ENCODE measurements at regions of chr10 and their contacts with region 1.

Region 1: DNA sequence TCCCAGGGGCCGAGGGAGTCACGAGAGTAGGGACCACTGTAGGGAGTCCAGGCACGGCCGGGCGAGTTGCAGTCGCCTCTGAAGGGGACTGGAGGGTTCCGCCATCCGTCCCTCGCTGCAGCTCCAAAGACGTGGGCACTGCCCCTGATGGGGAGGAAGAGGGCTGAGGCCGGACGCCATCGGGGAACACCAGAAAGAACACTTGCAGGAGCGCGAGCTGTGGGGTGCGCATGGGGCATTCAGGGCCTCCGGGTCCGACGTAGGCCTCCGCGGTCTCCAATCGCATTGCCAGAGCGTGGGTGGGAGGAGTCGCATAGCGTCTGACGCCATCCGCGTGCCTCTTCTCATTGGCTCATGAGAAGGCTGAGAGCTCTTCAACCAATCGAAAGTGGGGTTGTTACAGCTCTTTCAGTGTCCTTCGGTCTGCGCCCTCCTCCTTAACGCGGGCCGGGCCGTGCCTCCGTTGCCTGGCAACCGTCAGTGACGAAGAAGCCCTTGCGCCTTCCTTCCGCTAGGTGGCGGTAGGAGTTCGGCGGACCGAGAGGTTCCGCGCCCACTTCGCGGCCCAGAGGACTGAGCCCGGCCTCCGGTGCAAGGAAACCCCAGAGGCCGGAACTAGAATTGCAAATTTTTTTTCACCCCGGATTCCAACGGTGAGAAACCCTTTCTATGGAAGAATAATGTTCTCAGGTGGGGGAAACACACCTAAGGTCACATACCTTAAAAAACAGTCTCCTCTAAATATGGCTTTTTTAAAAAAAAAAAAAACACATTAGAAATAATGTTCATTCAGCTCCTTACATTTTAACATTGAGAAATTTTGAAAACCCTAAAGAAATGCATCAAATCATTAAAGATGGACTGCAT is at the start of gene TCTN3:
- DNase-seq: peak; percentile 97
- H3K4me3 Mint-ChIP-seq: peak within 1 kb of the TSS; percentile 96
- H3K27ac Mint-ChIP-seq: peak within 1 kb of the TSS; percentile 83
- H3K4me1 Mint-ChIP-seq: peaks cover 37% of the 10 kb centered on the region
- H3K27me3 Mint-ChIP-seq: no peaks in the 10 kb centered on the region
- total RNA-seq, gene TCTN3: 17.6 to 19.2 TPM

Region 2: GRCh38 chr10:95656291-95657164 is 37.4 kb before region 1 on chr10 and contains the start of gene ALDH18A1:
- CTCF ChIA-PET with region 1: interaction called, 8 read pairs
- intact Hi-C with region 1: loop called (anchors 1 kb)
- DNase-seq: peak; percentile 85
- H3K4me3 Mint-ChIP-seq: peak within 1 kb of the TSS; percentile 99
- H3K27ac Mint-ChIP-seq: peak within 1 kb of the TSS; percentile 88
- H3K4me1 Mint-ChIP-seq: peaks cover 31% of the 10 kb centered on the region
- H3K27me3 Mint-ChIP-seq: no peaks in the 10 kb centered on the region
- total RNA-seq, gene ALDH18A1: 82.1 to 91.7 TPM

Region 3: GRCh38 chr10:95841661-95842498 is 148.0 kb after region 1 on chr10:
- CTCF ChIA-PET with region 1: interaction called, 144 read pairs
- intact Hi-C with region 1: loop called (anchors 1 kb)
- DNase-seq: peak; percentile 67
- H3K4me3 Mint-ChIP-seq: no peak overlapping the region
- H3K27ac Mint-ChIP-seq: no peak overlapping the region
- H3K4me1 Mint-ChIP-seq: no peaks in the 10 kb centered on the region
- H3K27me3 Mint-ChIP-seq: peaks cover 6% of the 10 kb centered on the region

Region 4: DNA sequence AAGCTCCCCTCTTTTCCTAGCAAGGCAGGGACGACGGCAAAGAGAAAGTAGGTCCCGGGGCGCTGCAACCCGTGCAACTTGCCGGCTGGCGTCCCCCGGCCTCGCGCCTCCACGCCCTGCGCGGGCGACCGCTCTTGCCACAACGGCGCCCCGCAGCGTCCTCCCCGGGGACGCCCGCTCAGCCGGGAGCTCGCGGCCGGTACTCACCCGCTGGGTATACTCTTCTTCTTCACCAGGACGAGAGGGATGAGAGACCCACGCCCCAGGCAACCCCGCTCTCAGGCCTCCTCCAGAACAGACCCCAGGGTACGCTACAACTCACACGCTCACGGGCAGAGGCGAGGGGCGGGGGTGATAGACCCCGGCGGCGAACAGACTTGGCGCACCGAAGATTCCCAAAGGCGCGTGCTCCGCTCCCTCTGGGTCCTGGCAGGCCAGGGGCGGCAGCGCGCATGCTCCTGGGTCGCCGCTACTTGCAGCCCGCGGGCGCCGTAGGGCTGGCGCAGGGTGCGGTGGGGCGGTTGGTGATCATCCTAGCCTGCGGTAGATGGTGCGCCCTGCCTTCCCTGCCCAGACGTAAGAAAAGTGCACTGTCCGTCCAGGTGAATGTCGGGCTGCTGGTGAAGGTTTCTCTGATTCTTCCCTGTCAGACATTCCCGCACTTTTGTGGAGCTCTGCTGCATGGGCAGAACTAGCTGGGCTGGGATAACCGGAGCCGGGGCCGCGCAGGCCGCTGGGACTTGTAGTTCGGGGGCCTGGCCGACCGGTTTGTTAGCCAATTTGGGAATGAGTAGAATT is 213.8 kb after region 1 on chr10 and contains the start of gene CC2D2B:
- CTCF ChIA-PET with region 1: interaction called, 6 read pairs
- intact Hi-C with region 1: loop called (anchors 1 kb)
- DNase-seq: peak; percentile 73
- H3K4me3 Mint-ChIP-seq: peak within 1 kb of the TSS; percentile 90
- H3K27ac Mint-ChIP-seq: peak within 1 kb of the TSS; percentile 89
- H3K4me1 Mint-ChIP-seq: peaks cover 14% of the 10 kb centered on the region
- H3K27me3 Mint-ChIP-seq: no peaks in the 10 kb centered on the region
- total RNA-seq, gene CC2D2B: not detected

Region 5: GRCh38 chr10:96089670-96090462 is 396.0 kb after region 1 on chr10:
- CTCF ChIA-PET with region 1: interaction called, 4 read pairs
- intact Hi-C with region 1: loop called (anchors 1 kb)
- DNase-seq: peak; percentile 95
- H3K4me3 Mint-ChIP-seq: peak overlapping the region; percentile 92
- H3K27ac Mint-ChIP-seq: peak overlapping the region; percentile 98
- H3K4me1 Mint-ChIP-seq: peaks cover 5% of the 10 kb centered on the region
- H3K27me3 Mint-ChIP-seq: peaks cover 13% of the 10 kb centered on the region

Region 6: GRCh38 chr10:96292971-96293920 is 599.3 kb after region 1 on chr10:
- CTCF ChIA-PET with region 1: no interaction called
- intact Hi-C with region 1: loop called (anchors 5 kb)
- DNase-seq: peak; percentile 31
- H3K4me3 Mint-ChIP-seq: no peak overlapping the region
- H3K27ac Mint-ChIP-seq: no peak overlapping the region
- H3K4me1 Mint-ChIP-seq: peaks cover 17% of the 10 kb centered on the region
- H3K27me3 Mint-ChIP-seq: no peaks in the 10 kb centered on the region